ENCODE measurements at regions of chr1 and their contacts with region 1.

Region 1: GRCh38 chr1:188689543-188689942 is 1788.1 kb downstream of the BRINP3 start:
- DNase-seq: no peak
- ATAC-seq: no peak
- H3K4me3 ChIP-seq: no peak overlapping the region
- H3K27ac ChIP-seq: no peak overlapping the region
- H3K4me1 ChIP-seq: no peaks in the 10 kb centered on the region
- H3K27me3 ChIP-seq: no peaks in the 10 kb centered on the region
- CTCF ChIP-seq: no peak
- POLR2A ChIP-seq: no peak

Region 2: DNA sequence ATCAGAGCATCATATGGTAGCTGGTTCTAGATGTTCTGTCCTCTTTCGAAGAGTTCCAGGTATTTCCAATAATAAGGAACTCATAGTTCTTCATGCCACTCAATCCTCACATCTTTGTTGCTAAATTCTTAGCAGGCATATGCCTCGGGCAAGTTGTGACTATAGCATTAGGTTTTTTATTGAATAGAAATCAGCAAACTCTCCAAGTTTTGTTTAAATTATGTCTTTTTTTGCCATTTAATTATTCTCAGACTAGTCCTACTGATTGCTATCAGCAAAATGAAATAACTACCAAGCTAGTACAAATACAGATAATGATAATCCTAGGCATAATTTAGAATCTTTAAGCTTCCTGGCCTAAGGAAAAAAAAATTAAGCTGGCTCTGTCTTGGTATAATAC is 41.6 kb before region 1 on chr1:
- intact Hi-C with region 1: no loop called
- DNase-seq: no peak
- ATAC-seq: no peak
- H3K4me3 ChIP-seq: no peak overlapping the region
- H3K27ac ChIP-seq: no peak overlapping the region
- H3K4me1 ChIP-seq: no peaks in the 10 kb centered on the region
- H3K27me3 ChIP-seq: no peaks in the 10 kb centered on the region
- CTCF ChIP-seq: no peak
- POLR2A ChIP-seq: no peak

Region 3: DNA sequence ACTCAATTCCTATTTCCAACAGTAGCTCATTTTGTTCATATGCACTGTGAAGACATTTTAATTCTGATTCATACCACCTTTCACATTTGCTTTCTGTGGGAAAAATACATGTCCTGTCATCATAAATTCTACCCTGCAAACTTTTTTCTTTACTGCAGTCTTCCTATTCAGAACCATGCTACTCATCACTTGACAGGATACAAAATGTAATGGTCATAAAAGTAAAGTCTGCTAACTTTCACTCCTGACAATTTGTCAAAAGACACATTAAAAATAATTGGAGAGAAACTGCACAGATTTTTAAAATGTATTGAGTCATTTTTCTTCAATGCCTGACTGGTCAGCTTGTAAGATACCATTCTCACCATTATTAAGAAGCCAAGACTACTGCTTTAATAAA is 29.0 kb before region 1 on chr1:
- intact Hi-C with region 1: loop called in 1 of 10 experiments (anchors 2 kb)
- DNase-seq: no peak
- ATAC-seq: no peak
- H3K4me3 ChIP-seq: no peak overlapping the region
- H3K27ac ChIP-seq: no peak overlapping the region
- H3K4me1 ChIP-seq: no peaks in the 10 kb centered on the region
- H3K27me3 ChIP-seq: no peaks in the 10 kb centered on the region
- CTCF ChIP-seq: no peak
- POLR2A ChIP-seq: no peak

Measured in heart left ventricle (tissue), 16 donors.